Activated T-helper 2 cell treated with anti-CD3 and anti-CD28 coated beads, Interferon-gamma antibody, Interleukin-2, Interleukin-4, amounts not matched to agents 10 μg/mL and 5 μg/mL and 100 μg/mL, durations not matched to agents 14 hours and 24 hours and 36 hours (primary cell): ENCODE measurements at regions of chr5 and their contacts with region 1.

Region 1: DNA sequence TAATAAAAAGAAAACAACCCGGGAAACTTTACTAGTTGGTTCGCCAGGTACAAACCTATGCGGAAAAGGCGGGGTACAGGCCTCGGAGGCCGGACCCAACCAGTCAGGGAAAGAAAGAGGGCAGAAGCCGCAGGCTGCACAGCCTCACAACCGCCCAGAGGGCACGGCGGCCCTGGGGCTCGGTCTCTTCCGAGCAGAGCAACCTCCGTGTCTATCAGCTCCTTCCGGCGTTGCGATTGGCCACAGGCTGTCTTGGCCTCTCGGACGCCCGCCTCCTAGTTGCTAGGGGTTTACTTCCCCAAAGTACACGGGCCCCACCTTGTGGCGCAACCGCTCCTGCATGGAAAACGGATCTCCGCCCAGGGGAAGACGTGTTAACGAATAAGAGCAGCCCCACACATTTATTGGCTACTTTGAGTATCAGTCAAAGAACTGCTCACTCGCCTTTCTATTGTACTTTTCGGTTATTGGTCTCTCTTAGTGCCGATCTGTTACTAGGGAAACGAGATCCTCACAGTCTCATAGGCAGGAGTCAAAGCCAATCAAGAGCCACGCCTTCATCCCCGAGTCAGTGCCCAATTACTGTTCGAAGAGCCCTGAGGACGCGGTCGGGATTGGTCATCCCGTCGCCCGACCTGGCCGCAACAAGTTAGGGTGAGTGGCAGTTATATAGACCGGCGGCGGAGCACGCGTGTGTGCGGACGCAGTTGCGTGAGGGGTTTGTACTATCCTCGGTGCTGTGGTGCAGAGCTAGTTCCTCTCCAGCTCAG is at the start of gene G3BP1:
- DNase-seq: peak; percentile 99
- H3K4me3 Mint-ChIP-seq: peak within 1 kb of the TSS; percentile 93
- H3K27ac Mint-ChIP-seq: peak within 1 kb of the TSS; percentile 76
- H3K4me1 Mint-ChIP-seq: peaks cover 31% of the 10 kb centered on the region
- H3K27me3 Mint-ChIP-seq: no peaks in the 10 kb centered on the region
- total RNA-seq, gene G3BP1: 296 and 312 TPM in 2 replicates

Region 2: DNA sequence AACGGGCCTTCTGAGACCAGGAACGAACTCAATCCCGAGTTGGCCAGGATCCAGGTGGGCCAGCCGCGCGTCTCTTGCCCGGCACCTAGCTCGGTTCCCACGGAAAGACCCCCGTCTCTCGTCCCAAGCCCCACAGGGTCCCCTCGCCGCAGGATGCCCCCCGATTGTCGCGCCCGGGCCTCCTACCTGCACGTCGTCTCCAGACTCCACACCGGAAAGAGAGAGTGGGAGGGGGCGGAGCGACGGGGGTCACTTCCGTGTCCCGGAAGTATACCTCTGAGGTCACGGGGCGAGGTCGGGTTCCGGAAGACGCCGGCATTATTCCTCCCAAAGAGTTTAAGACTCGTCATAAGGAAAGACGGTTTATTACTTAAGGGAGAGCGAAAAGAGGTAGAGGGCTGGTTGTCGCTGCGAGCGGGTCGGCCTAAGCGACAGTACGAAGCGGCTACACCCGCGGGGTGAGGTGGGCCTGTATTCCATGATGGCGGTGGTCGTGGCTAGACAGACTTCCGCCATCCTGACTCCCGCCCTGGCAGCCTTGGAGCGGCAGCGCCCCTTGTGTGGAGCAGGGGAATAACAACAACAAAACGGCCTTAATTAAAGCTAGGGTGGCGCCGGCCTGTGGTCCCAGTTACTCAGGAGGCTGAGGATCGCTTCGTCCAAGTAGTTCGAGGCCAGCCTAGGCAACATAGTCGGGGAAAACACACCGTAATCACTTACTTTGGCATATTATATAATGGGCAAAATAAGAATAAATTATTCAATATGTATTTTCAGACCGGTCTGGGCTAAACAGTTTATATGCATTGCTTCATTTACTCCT is 1321.7 kb before region 1 on chr5 and contains the start of gene RPS14:
- intact Hi-C with region 1: loop called (anchors 10 kb)
- DNase-seq: peak; percentile 91
- H3K4me3 Mint-ChIP-seq: peak within 1 kb of the TSS; percentile 99
- H3K27ac Mint-ChIP-seq: peak within 1 kb of the TSS; percentile 100
- H3K4me1 Mint-ChIP-seq: peaks cover 23% of the 10 kb centered on the region
- H3K27me3 Mint-ChIP-seq: no peaks in the 10 kb centered on the region
- total RNA-seq, gene RPS14: 2,552 and 2,593 TPM in 2 replicates

Region 3: DNA sequence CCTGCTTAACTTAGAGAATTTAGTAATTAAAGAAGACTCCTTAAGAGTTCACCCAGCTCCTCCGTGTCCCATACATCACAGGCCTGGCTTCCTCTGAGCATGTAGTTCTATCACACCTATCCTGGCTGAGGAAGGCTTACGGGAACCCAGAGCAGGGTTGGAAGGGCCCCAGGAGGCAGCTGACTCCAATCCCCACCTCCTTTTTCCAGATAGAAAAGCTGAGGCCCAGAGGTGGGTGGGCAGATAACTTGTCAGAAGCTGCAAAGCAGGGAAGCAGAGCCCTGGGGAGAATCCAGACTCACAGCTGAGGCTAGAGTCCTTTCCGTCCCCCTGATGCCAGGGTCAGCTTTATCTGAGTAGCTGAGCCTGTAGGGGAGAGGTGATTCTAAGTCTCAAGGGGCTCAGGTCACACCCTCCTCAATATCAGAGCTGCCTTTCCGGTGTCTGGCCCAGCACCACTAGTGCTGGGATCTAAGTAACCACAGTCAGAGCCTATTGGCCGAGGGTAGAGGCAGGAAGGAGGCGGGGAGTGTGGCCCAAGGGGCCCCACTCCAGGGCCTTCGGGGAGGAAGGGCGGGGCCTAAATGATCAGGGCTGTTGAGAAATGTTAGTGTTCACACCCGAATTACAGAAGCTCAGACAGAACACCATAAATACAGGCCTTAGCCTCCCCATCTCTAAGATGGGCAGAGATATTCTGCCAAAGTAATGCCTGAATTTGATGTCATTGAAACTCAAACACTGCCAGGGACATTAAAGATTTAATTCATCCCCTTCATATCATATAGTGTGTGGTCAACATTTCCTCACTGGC is 557.4 kb before region 1 on chr5:
- intact Hi-C with region 1: loop called (anchors 1 kb)
- DNase-seq: peak; percentile 84
- H3K4me3 Mint-ChIP-seq: peak overlapping the region; percentile 79
- H3K27ac Mint-ChIP-seq: peak overlapping the region; percentile 97
- H3K4me1 Mint-ChIP-seq: peaks cover 75% of the 10 kb centered on the region
- H3K27me3 Mint-ChIP-seq: no peaks in the 10 kb centered on the region

Region 4: GRCh38 chr5:151447174-151448037 is 324.0 kb before region 1 on chr5 and contains the start of gene SLC36A1:
- intact Hi-C with region 1: loop called (anchors 2 kb)
- DNase-seq: peak; percentile 88
- H3K4me3 Mint-ChIP-seq: peak within 1 kb of the TSS; percentile 85
- H3K27ac Mint-ChIP-seq: peak within 1 kb of the TSS; percentile 83
- H3K4me1 Mint-ChIP-seq: peaks cover 29% of the 10 kb centered on the region
- H3K27me3 Mint-ChIP-seq: peaks cover 38% of the 10 kb centered on the region
- total RNA-seq, gene SLC36A1: 6.0 and 6.2 TPM in 2 replicates

Region 5: DNA sequence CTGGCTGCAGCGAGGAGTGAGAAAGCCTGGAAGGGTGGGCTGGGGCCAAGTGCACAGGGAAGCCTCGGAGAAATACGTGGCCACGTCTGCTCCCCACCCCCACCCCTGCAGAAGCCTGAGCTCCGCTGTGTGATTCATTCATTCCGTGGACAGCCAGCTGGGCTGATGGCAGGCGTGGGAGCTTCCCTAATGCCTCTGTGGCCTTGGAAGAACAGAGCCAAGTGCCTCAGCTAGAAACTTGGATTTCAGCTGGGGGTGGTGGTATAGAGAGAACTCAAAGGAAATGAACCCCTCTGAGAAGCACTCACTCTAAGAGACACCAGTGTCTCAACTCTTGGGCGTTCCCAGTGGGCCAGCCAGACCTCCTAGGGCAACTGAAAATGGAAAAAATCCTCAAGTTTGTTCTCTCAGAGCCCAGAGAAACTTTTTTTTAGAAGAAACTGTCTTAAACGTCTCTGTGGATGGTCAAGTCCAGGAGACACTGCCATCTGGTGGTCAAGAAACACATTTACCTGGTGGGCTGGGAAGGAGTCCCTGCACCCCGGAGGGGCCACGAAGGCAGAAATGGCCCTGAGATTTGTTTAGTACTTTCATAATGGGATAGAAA is 31.0 kb before region 1 on chr5:
- intact Hi-C with region 1: loop called (anchors 2 kb)
- DNase-seq: peak; percentile 26
- H3K4me3 Mint-ChIP-seq: no peak overlapping the region
- H3K27ac Mint-ChIP-seq: no peak overlapping the region
- H3K4me1 Mint-ChIP-seq: peaks cover 16% of the 10 kb centered on the region
- H3K27me3 Mint-ChIP-seq: no peaks in the 10 kb centered on the region

Region 6: DNA sequence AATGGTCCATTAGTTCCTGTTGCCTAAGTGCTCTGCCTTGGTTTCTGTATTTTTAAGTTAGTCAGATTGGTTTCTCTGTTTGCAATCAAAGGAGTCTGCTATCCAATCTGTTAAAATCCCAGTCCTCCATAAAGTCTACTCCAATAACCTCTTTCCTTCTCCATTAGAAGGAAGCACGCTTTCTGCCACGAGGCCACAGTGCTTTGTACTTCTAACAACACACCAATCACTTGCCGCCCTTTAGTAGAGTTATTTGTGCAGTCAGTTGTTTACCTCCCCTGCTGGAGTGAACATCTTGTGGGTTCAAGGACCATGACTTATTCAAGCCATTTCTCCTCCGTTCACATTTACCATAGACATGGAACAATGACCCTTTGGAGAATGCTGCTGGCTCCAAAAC is 84.3 kb after region 1 on chr5:
- intact Hi-C with region 1: no loop called
- DNase-seq: no peak
- H3K4me3 Mint-ChIP-seq: no peak overlapping the region
- H3K27ac Mint-ChIP-seq: no peak overlapping the region
- H3K4me1 Mint-ChIP-seq: no peaks in the 10 kb centered on the region
- H3K27me3 Mint-ChIP-seq: no peaks in the 10 kb centered on the region